ENCODE measurements at regions of chr12 and their contacts with region 1.

Region 1: GRCh38 chr12:63779498-63780481 is at the start of gene RXYLT1:
- DNase-seq: peak; percentile 68 to 85 (median 77)
- ATAC-seq: peak; percentile 98
- H3K4me3 ChIP-seq: peak within 1 kb of the TSS; percentile 72
- H3K4me3 Mint-ChIP-seq: peak within 1 kb of the TSS; percentile 91 to 99 (median 96)
- H3K27ac ChIP-seq: peak within 1 kb of the TSS; percentile 88
- H3K27ac Mint-ChIP-seq: peak within 1 kb of the TSS; percentile 89 to 98 (median 94)
- H3K4me1 ChIP-seq: peaks cover 3 to 13% of the 10 kb centered on the region in 2 donors
- H3K4me1 Mint-ChIP-seq: peaks cover 6 to 48% (median 25%) of the 10 kb centered on the region in 7 donors
- H3K27me3 ChIP-seq: no peaks in the 10 kb centered on the region
- H3K27me3 Mint-ChIP-seq: peaks cover 0 to 3% (median 0%) of the 10 kb centered on the region in 5 donors
- total RNA-seq, gene RXYLT1: 9.9 to 22.0 (median 15.4) TPM

Region 2: GRCh38 chr12:62799126-62799736 is 980.6 kb before region 1 on chr12:
- CTCF ChIA-PET with region 1: no interaction called
- POLR2A ChIA-PET with region 1: no interaction called
- intact Hi-C with region 1: loop called in 1 of 2 experiments (anchors 5 kb)
- DNase-seq: peak in 8 of 9 donors; percentile 5 to 53 (median 40)
- ATAC-seq: peak; percentile 81
- H3K4me3 ChIP-seq: no peak overlapping the region
- H3K4me3 Mint-ChIP-seq: no peak overlapping the region
- H3K27ac ChIP-seq: no peak overlapping the region
- H3K27ac Mint-ChIP-seq: no peak overlapping the region
- H3K4me1 ChIP-seq: no peaks in the 10 kb centered on the region
- H3K4me1 Mint-ChIP-seq: no peaks in the 10 kb centered on the region
- H3K27me3 ChIP-seq: no peaks in the 10 kb centered on the region
- H3K27me3 Mint-ChIP-seq: peaks cover 0 to 14% (median 0%) of the 10 kb centered on the region in 5 donors

Region 3: DNA sequence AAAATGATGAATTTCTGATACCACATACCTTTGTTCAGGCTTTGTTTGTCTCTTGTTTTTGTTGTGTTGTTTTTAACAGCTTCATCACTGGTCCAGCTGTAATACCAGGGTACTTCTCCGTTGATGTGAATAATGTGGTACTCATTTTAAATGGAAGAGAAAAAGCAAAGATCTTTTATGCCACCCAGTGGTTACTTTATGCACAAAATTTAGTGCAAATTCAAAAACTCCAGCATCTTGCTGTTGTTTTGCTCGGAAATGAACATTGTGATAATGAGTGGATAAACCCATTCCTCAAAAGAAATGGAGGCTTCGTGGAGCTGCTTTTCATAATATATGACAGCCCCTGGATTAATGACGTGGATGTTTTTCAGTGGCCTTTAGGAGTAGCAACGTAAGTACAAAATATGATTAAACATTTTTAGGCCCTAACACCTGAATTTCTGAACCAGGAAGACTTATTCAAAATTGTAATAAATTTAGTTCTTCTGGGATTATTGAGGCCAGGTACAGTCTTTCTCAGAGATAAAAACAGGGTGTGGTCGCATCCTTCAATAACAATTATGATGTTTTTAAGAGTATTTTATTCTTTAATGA is 22.3 kb after region 1 on chr12:
- CTCF ChIA-PET with region 1: no interaction called
- POLR2A ChIA-PET with region 1: no interaction called
- intact Hi-C with region 1: loop called in 1 of 2 experiments (anchors 2 kb)
- DNase-seq: peak in 6 of 9 donors; percentile 3 to 34 (median 26)
- ATAC-seq: no peak
- H3K4me3 ChIP-seq: no peak overlapping the region
- H3K4me3 Mint-ChIP-seq: no peak overlapping the region
- H3K27ac ChIP-seq: no peak overlapping the region
- H3K27ac Mint-ChIP-seq: no peak overlapping the region
- H3K4me1 ChIP-seq: no peaks in the 10 kb centered on the region
- H3K4me1 Mint-ChIP-seq: peaks cover 0 to 4% (median 0%) of the 10 kb centered on the region in 7 donors
- H3K27me3 ChIP-seq: no peaks in the 10 kb centered on the region
- H3K27me3 Mint-ChIP-seq: no peaks in the 10 kb centered on the region

Region 4: GRCh38 chr12:63843721-63844390 is 64.1 kb after region 1 on chr12:
- CTCF ChIA-PET with region 1: no interaction called
- POLR2A ChIA-PET with region 1: no interaction called
- intact Hi-C with region 1: loop called in 1 of 2 experiments (anchors 2 kb)
- DNase-seq: peak; percentile 50 to 76 (median 70)
- ATAC-seq: peak; percentile 97
- H3K4me3 ChIP-seq: peak overlapping the region; percentile 57
- H3K4me3 Mint-ChIP-seq: peak overlapping the region; percentile 32 to 93 (median 67)
- H3K27ac ChIP-seq: no peak overlapping the region
- H3K27ac Mint-ChIP-seq: no peak overlapping the region
- H3K4me1 ChIP-seq: no peaks in the 10 kb centered on the region
- H3K4me1 Mint-ChIP-seq: peaks cover 0 to 12% (median 10%) of the 10 kb centered on the region in 7 donors
- H3K27me3 ChIP-seq: peaks cover 3 to 11% of the 10 kb centered on the region in 2 donors
- H3K27me3 Mint-ChIP-seq: peaks cover 17 to 47% (median 35%) of the 10 kb centered on the region in 5 donors

Region 5: DNA sequence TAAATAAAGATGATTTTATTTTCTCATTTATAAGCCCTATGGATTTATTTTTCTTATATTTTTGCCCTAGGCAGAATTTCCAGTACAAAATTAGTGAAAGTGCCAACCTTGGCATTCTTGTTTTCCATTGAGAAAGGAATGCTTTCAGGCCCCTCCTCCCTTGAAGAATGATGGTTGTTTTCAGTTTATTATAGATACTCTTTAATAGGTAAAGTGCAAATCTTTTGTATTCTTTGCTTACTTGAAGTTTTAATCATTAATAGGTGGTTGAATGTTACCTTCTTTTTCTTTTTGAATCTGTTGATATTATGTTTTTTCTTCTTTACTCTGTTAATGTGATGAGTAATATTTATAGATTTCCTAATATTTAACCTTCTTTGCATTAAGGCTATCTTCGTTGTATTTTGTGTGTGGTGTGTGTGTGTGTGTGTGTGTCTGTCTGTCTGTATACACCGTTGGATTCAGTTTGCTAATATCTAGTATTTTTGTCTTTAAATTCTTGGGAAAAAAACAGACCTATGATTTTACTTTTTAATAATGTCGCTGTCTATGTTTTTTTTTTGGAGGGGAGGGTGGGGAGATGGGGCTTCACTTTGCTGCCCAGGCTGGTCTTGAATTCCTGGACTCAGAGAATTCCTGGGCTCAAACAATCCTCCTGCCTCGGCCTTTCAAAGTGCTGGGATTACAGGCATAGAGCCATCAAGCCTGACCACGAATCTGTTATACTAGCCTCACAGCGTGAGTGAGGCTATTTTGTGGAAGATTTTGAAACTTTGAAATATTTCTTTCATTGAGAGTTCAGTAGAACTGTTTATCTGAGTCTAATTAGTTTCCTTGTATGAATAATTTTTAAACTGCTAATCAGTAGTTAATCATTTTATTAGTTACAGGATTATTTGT is 78.2 kb after region 1 on chr12:
- CTCF ChIA-PET with region 1: no interaction called
- POLR2A ChIA-PET with region 1: no interaction called
- intact Hi-C with region 1: no loop called
- DNase-seq: no peak
- ATAC-seq: no peak
- H3K4me3 ChIP-seq: no peak overlapping the region
- H3K4me3 Mint-ChIP-seq: no peak overlapping the region
- H3K27ac ChIP-seq: no peak overlapping the region
- H3K27ac Mint-ChIP-seq: no peak overlapping the region
- H3K4me1 ChIP-seq: no peaks in the 10 kb centered on the region
- H3K4me1 Mint-ChIP-seq: no peaks in the 10 kb centered on the region
- H3K27me3 ChIP-seq: peaks cover 0 to 3% of the 10 kb centered on the region in 2 donors
- H3K27me3 Mint-ChIP-seq: peaks cover 0 to 21% (median 8%) of the 10 kb centered on the region in 5 donors

Region 6: DNA sequence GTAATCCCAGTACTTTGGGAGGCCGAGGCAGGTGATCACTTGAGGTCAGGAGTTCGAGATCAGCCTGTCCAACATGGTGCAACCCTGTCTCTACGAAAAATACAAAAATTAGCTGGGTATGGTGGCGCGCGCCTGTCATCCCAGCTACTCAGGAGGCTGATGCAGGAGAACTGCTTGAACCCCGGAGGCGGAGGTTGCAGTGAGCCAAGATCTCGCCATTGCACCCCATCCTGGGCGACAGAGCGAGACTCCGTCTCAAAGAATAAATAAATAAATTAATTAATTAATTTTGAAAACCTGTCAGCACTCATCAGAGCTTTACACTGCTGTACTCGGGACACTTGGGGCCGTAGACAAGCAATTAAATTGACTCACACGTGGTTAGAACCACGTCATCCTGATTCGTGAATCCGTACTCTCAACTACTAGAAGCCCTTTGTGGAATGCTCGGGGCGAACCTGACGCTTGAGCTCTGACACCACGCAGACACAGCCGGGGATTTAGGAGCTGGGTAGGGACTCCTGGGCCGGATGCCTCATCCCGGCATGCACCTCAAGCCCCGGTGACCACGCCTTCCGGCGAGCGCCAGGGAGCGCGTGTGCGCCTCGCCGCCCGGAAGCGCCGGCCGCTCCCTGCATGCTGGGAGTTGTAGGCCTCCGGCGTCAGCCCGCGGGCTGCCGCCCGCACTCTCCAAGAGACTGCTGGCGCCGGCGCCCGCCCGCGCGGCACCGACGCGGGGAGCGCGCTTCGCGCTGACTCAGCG is 624.1 kb after region 1 on chr12 and contains the start of gene XPOT:
- CTCF ChIA-PET with region 1: no interaction called
- POLR2A ChIA-PET with region 1: interaction called, 3 read pairs
- intact Hi-C with region 1: loop called (anchors 1 kb)
- DNase-seq: peak; percentile 85 to 94 (median 92)
- ATAC-seq: peak; percentile 97
- H3K4me3 ChIP-seq: peak within 1 kb of the TSS; percentile 81
- H3K4me3 Mint-ChIP-seq: peak within 1 kb of the TSS; percentile 90 to 99 (median 96)
- H3K27ac ChIP-seq: peak within 1 kb of the TSS; percentile 82
- H3K27ac Mint-ChIP-seq: peak within 1 kb of the TSS; percentile 84 to 98 (median 95)
- H3K4me1 ChIP-seq: peaks cover 0 to 8% of the 10 kb centered on the region in 2 donors
- H3K4me1 Mint-ChIP-seq: peaks cover 8 to 41% (median 25%) of the 10 kb centered on the region in 7 donors
- H3K27me3 ChIP-seq: no peaks in the 10 kb centered on the region
- H3K27me3 Mint-ChIP-seq: no peaks in the 10 kb centered on the region
- total RNA-seq, gene XPOT: 46.6 to 118 (median 75.1) TPM